ENCODE measurements at regions of chr2 and their contacts with region 1.

Region 1: DNA sequence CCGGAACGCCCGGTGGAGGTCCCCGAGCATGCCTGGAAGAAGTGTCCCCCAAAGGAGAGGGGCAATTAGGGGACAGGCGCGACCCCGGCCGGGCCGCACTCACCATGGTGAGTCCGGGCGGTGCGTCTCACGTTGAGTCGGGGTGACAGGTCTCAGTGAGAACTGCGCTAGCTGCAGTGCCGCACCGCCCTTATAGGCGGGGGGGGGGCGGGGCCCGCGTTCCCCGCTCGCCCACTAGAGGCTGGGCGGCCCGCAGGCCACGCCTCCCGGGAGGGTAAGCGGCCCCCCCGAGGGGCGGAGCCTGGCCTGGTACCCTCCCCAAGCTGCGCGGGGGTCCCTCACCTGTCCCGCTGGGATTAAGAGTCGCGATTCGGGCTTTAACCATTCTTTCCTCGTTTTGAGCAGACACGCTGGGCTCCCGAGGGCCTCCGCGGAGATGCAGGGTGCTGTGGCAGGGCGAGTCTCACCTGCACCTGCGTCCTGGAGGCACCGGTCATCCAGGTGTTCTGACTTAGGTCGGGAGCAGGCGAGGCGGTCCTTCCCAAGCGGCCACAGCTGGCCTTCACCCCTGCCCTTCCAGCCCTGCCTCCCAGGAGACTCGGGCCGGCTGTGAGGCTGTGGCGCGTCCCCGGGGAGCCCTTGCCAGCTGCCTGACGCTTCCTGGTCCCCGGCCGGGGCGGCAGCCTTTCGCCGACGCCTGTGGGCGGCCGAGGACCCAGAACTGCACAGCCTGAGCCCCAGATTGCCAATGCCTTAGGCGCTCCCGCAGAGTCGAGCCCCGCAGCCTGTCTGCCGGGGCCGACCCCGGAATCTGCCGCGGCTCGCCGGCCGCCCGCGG is at the start of gene TUBA4A:
- DNase-seq: peak; percentile 91
- ATAC-seq: peak; percentile 80
- H3K4me3 Mint-ChIP-seq: peak within 1 kb of the TSS; percentile 99
- H3K27ac Mint-ChIP-seq: peak within 1 kb of the TSS; percentile 100
- H3K4me1 Mint-ChIP-seq: peaks cover 44% of the 10 kb centered on the region
- H3K27me3 Mint-ChIP-seq: no peaks in the 10 kb centered on the region
- total RNA-seq, gene TUBA4A: 286 to 292 TPM

Region 2: DNA sequence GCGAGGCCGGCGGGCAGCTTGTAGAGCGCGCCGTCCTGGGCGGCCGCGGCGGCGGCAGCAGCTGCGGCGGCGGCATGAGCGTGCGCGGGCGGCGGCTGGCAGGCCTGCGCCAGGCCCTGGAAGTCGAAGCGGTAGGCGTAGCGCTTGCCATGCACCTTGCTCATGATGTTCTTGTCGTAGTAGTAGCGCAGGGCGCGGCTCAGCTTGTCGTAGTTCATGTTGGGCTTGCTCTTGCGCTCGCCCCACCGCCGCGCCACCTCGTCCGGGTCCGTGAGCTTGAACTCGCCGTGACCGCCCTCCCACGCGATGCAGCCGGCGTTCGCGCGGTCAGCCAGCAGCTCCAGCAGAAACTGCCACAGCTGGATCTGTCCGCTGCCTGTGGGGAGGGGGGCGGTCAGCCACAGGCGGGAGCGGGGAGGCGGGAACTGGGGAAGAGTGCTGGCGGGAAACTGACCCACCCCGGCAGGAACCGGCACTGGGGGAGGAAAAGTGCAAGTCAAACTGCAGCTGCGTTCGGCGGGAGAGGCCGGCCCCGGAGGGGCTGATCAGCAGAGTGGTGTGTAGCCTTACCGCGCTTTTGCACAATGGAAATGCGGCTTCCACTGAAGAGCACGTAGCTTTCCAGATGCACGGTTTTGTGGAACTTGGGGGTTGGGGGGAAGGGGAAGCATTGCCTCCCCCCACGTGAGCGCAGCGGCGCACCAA is 271.9 kb before region 1 on chr2:
- CTCF ChIA-PET with region 1: no interaction called
- POLR2A ChIA-PET with region 1: no interaction called
- DNase-seq: no peak
- ATAC-seq: peak; percentile 16
- H3K4me3 Mint-ChIP-seq: no peak overlapping the region
- H3K27ac Mint-ChIP-seq: no peak overlapping the region
- H3K4me1 Mint-ChIP-seq: peaks cover 26% of the 10 kb centered on the region
- H3K27me3 Mint-ChIP-seq: peaks cover 65% of the 10 kb centered on the region

Region 3: DNA sequence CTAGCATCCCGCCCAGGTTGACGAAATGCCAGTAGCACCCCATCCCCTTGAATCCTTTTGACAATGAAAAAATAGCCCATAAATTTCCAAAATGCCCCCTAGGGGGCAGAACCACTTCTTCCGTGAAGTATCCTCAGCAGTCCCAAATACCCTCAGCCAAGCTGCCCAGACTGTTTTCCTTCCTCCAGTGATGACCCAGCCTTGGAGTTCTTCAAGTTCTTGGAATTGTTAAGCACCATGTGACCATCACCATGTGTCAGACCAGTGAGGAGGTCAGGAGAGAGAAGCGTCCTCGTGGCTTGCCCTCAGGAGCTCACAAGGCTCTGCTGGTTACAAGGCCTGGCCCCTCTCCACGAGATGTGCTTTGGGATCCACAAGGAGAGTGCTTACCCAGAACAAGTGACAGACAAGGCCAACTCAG is 82.7 kb before region 1 on chr2:
- CTCF ChIA-PET with region 1: interaction called, 19 read pairs
- POLR2A ChIA-PET with region 1: interaction called, 20 read pairs
- DNase-seq: peak; percentile 54
- ATAC-seq: peak; percentile 50
- H3K4me3 Mint-ChIP-seq: no peak overlapping the region
- H3K27ac Mint-ChIP-seq: no peak overlapping the region
- H3K4me1 Mint-ChIP-seq: peaks cover 30% of the 10 kb centered on the region
- H3K27me3 Mint-ChIP-seq: no peaks in the 10 kb centered on the region

Region 4: GRCh38 chr2:219177552-219178376 is 76.2 kb before region 1 on chr2 and contains the start of gene RETREG2:
- CTCF ChIA-PET with region 1: interaction called, 6 read pairs
- POLR2A ChIA-PET with region 1: interaction called, 20 read pairs
- DNase-seq: peak; percentile 82
- ATAC-seq: peak; percentile 55
- H3K4me3 Mint-ChIP-seq: peak within 1 kb of the TSS; percentile 92
- H3K27ac Mint-ChIP-seq: peak within 1 kb of the TSS; percentile 95
- H3K4me1 Mint-ChIP-seq: peaks cover 61% of the 10 kb centered on the region
- H3K27me3 Mint-ChIP-seq: no peaks in the 10 kb centered on the region
- total RNA-seq, gene RETREG2: 104 to 111 TPM

Region 5: DNA sequence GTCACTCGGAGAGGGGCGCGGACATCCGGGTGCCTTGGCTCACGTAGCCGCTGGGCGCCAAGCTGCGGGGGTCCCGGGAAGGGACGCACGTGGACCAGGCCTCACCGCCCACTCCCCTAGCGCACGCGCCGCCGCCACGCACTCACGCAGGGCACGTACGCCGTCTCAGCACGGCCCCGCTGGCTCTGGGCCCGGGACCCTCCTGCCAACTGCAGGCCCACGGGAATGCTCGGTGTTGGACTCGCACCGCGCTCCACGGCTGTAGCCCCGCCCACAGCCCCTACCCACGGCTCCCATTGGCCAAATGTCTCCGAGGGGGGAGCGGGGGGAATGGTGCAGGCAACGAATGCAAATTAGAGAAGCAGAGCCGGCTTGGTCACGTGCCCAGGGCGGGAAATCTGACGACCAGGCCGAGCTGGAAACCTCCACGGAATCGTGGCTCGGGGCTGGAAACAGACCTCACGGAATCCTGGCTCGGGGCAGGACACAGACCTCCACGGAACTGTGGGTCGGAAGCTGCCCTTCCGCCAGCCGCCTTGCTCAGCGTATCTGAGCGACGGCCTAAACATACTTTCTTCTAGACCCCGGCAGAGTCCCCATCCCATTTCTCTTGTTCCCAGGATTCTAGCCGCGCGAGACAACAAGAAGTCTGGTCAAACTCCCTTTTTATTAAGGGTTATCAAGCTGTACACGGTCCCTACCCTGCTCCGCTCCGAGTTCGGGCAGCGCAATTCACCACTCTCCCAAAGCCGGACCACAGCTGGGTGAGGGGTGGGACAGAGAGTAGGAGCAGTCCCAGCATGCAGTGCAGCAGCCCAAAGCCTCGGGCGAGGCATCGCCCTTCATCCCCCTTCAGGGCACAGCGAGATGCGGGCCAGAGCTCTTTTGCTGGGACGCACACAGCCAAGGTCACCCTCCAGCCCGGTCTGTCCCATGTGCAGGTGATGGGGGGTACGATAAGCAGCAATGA is 35.0 kb before region 1 on chr2 and contains the start of gene ABCB6:
- CTCF ChIA-PET with region 1: interaction called, 8 read pairs
- POLR2A ChIA-PET with region 1: interaction called, 16 read pairs
- DNase-seq: peak; percentile 87
- ATAC-seq: peak; percentile 77
- H3K4me3 Mint-ChIP-seq: peak within 1 kb of the TSS; percentile 77
- H3K27ac Mint-ChIP-seq: peak within 1 kb of the TSS; percentile 75
- H3K4me1 Mint-ChIP-seq: peaks cover 26% of the 10 kb centered on the region
- H3K27me3 Mint-ChIP-seq: no peaks in the 10 kb centered on the region
- total RNA-seq, gene ABCB6: 11.6 to 11.9 TPM

Region 6: DNA sequence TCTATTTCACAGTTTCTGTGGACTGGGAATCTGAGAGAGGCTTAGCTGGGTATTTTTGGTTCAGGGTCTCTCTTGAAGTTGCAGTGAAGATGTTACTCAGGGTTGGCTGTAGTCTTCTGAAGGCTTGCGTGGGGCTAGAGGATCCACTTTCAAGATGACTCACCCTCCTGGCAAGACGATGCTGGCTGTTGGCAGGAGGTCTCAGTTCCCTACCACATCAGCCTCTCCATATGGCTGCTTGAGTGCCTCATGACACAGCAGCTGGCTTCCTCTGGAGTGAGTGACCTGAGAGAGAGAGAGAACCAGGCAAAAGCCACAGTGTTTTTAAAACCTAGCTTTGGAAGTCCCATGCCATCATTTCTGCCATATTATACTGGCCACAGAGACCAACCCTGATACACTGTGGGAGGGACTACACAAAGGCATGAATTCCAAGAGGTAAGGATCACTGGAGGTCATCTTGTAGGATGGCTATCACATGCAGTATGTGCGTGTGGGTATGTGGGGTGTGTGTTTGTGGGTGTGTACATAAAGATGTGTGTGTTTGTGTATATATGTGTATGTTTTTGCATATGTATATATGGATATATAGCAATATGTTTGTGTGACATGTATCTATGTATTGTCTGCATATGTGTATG is 108.7 kb after region 1 on chr2:
- CTCF ChIA-PET with region 1: no interaction called
- POLR2A ChIA-PET with region 1: no interaction called
- DNase-seq: no peak
- ATAC-seq: no peak
- H3K4me3 Mint-ChIP-seq: no peak overlapping the region
- H3K27ac Mint-ChIP-seq: no peak overlapping the region
- H3K4me1 Mint-ChIP-seq: peaks cover 4% of the 10 kb centered on the region
- H3K27me3 Mint-ChIP-seq: peaks cover 22% of the 10 kb centered on the region